Posterior cingulate gyrus (tissue), 11 donors: ENCODE measurements at regions of chr5 and their contacts with region 1.

Region 1: DNA sequence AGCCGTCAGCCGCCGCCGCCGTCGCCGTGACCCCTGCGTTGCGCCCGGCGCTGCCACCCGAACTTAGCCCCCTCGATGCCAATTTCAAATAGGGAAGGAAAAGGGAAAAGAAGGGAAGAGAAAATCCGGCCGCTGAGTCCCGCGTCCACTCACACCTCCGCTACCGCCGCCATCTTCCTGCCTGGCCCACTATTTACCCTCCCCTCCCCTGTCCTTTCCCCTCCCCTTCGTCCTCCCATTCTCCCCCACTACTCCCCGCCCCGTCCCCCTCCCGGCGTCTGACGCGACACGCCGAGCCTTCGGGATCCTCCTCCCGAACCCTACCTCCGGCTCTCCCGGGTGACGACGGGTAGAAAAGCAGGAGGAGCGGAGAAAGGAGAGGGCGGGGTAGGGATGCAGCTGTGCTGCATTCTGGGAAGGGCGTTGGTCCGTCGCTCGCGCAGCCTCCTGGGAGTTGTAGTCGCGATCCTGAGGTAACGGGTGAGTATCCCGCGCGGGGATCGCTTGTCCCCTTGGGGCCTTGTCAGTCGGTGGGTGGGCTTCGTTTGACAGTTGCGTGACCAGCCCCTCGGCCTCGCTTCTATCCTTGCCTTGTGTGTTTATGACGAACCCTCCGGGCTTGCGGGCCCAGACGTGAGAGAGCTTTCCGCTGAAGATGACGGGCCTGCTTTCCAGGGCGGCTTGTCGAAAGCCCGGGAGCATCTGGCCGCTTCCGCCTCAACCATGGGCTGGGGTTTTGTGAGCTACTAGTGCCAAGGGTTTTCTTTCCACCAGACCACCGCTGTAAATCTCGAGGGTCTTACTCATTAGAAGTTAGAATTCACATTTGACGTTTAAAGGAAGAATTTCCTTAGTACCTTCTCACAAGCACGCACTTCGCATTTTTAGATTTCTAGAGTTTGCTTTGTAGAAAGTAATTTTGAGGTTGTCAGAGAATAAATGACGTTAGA is at the starts of genes CERT1 and POLK:
- DNase-seq: peak; percentile 98 to 100 (median 99)

Region 2: GRCh38 chr5:75236322-75237316 is 275.1 kb before region 1 on chr5 and contains the start of gene ANKRD31:
- intact Hi-C with region 1: loop called (anchors 5 kb)
- DNase-seq: peak; percentile 68 to 98 (median 80)

Region 3: GRCh38 chr5:75668977-75669689 is 157.4 kb after region 1 on chr5:
- intact Hi-C with region 1: loop called (anchors 5 kb)
- DNase-seq: peak in 1 of 10 donors; percentile 10

Region 4: DNA sequence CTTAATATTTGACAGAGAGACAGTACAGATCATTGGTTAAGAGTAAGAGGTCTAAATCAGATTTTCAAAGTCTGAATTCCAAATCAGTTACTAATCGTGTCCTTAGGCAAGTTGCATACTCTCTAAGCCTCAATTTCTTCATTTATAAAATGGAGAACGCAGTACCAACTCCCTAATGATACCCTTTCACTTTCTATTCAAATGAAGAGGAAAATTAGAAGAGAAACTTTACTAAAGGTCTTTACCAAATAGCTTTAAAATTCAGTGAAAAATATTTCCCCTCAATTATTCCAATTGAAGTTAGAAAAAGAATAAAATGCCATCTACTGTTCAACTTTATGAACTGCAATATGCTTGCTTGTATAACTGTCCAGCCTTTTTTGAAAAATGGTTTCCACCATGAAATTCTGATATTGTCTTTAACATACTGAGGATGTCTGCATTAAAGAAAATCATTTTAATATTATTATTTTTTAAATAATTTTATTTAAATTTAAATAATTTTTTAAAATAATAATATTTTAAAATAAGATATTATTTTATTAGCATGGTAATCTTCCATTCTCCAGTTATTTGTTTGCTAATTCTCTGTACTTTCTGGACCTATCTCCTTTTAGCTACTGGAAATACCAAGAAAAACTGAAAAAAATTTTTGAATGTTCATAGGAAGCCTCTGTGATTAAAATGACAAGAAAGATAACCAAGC is 169.6 kb after region 1 on chr5:
- intact Hi-C with region 1: no loop called
- DNase-seq: no peak